Endothelial cell of umbilical vein (primary cell): ENCODE measurements at regions of chr11 and their contacts with region 1.

Region 1: DNA sequence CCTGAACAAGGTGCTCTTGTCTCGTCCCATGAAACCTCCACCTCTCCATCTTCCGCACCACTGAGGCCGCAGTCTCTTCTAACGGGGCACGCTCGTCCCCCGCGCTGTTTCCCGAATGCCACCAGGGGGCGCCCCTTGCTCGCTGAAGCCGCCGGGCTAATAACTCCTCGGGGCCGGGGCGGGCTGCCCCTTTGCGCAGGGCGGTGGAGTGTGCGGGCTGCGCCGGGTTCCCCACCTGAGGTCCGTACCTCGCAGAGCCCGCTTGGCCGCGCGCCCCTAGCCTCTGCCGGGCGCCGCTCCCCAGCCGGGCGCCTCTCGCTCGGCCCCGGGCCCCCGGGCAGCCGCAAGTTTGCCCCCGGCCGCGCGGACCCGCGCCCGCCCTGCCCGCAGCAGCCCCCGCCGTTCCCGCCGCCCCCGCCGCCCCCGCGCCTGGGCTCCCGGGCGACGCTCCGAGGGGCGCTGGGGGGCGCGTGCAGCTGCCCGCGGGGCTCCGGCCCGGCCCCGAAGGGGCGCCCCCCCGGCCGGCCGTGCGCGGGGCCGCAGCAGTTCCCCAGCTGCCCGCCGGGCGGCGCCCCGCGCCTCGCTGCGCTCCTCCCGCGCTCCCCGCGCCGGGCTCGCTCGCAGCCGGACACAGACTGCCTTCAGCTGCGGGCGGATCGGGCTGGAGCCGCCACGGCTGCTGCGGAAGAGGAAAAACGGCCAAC is at the start of gene GRIK4:
- DNase-seq: peak; percentile 64
- H3K4me3 ChIP-seq: peak within 1 kb of the TSS in 1 of 3 experiments; percentile 25
- H3K27ac ChIP-seq: no peak within 1 kb of the TSS
- H3K4me1 ChIP-seq: no peaks in the 10 kb centered on the region
- H3K27me3 ChIP-seq: peaks cover 7 to 12% of the 10 kb centered on the region in 2 experiments
- CTCF ChIP-seq: peak; percentile 89 to 94
- POLR2A ChIP-seq: no peak
- total RNA-seq, gene GRIK4: 0.74 and 1.6 TPM in 2 replicates

Region 2: GRCh38 chr11:120235024-120235861 is 276.0 kb before region 1 on chr11:
- CTCF ChIA-PET with region 1: no interaction called
- POLR2A ChIA-PET with region 1: no interaction called
- dilution Hi-C with region 1: no loop called
- intact Hi-C with region 1: loop called (anchors 1 kb)
- DNase-seq: peak; percentile 56
- H3K4me3 ChIP-seq: no peak overlapping the region
- H3K27ac ChIP-seq: no peak overlapping the region
- H3K4me1 ChIP-seq: no peaks in the 10 kb centered on the region
- H3K27me3 ChIP-seq: peaks cover 19% of the 10 kb centered on the region in 2 experiments
- CTCF ChIP-seq: peak; percentile 77 to 79
- POLR2A ChIP-seq: no peak

Region 3: DNA sequence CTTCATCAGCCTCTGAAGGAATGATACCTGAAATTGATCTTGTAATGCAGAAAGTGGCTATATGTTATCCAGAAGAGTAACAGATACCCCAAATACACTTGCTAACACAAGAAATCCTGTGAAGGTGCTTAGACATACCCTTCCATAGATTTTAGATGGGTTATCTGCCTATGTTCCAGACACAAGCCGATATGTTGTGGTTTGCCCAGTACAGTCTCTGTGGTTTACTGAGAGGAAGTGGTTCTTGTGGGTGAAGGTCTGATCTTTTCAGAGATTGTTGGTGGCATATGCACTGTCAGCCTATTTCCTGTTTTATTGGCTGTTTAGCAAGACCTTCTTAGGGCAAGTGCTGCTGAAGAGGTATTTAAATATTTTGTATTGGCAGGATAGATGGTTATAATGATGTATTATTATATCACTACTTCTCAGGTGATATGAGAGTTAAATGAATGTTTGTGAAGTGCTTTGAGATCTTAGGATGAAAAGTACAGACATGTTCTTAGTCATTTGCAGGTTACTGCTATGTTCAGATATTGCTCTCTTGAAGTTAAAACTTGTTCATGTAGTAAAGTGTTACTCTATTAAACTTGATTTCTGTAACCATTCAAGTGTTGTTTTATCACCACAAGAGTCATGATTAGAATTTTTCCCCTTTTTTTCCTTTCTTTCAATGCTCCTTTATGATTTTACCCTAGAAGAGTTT is 166.8 kb before region 1 on chr11:
- CTCF ChIA-PET with region 1: no interaction called
- POLR2A ChIA-PET with region 1: no interaction called
- dilution Hi-C with region 1: no loop called
- intact Hi-C with region 1: no loop called
- DNase-seq: no peak
- H3K4me3 ChIP-seq: no peak overlapping the region
- H3K27ac ChIP-seq: no peak overlapping the region
- H3K4me1 ChIP-seq: peaks cover 59% of the 10 kb centered on the region
- H3K27me3 ChIP-seq: no peaks in the 10 kb centered on the region
- CTCF ChIP-seq: no peak
- POLR2A ChIP-seq: no peak

Region 4: DNA sequence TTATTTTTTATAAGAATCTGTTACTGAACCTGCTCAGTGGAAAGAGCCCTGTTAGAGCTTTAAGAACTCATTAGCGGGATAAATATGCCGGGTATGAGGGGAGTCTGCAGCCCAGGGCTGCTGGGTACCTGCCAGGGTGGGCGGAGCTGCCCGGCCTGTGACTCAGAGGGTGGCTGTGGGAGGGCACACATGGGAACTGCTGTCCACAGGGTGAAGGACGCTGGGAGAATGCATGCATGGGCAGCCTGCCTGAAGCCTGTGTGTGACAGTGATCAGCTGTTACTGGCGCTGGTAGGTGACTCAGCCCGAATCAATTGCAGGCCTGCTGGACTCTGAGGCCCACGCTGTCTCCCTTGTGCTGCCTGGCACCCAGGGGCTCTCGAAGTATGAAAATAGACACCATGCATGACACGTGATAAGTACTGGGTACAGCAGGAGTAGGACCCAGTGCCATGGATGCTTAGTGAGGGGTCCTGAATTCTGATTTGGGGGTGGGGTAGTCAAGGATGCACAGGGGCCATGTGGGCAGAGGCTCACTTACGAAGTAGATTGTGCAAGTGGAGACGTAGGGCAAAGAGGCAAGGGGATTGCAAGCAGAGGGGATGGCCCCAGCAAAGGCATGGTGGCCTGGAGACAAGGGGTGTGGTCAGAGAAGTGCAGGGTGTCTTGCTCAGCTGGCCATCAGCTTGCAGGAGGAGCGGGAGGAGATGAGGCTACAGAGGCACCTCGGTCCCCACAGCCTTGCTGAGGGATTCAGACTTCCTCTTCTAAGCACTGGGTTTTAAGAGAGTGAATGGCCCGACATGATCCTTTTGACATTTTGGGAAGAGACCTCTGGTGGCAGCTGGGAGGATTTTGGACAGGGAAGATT is 36.8 kb after region 1 on chr11:
- CTCF ChIA-PET with region 1: interaction called, 18 read pairs
- POLR2A ChIA-PET with region 1: no interaction called
- dilution Hi-C with region 1: no loop called
- intact Hi-C with region 1: no loop called
- DNase-seq: peak; percentile 91
- H3K4me3 ChIP-seq: no peak overlapping the region
- H3K27ac ChIP-seq: no peak overlapping the region
- H3K4me1 ChIP-seq: peaks cover 13% of the 10 kb centered on the region
- H3K27me3 ChIP-seq: no peaks in the 10 kb centered on the region
- CTCF ChIP-seq: no peak
- POLR2A ChIP-seq: no peak

Region 5: GRCh38 chr11:120635136-120635810 is 124.0 kb after region 1 on chr11:
- CTCF ChIA-PET with region 1: interaction called, 6 read pairs
- POLR2A ChIA-PET with region 1: no interaction called
- dilution Hi-C with region 1: no loop called
- intact Hi-C with region 1: loop called (anchors 5 kb)
- DNase-seq: no peak
- H3K4me3 ChIP-seq: no peak overlapping the region
- H3K27ac ChIP-seq: no peak overlapping the region
- H3K4me1 ChIP-seq: no peaks in the 10 kb centered on the region
- H3K27me3 ChIP-seq: peaks cover 0 to 1% of the 10 kb centered on the region in 2 experiments
- CTCF ChIP-seq: no peak
- POLR2A ChIP-seq: no peak

Region 6: GRCh38 chr11:120784566-120785251 is 273.4 kb after region 1 on chr11:
- CTCF ChIA-PET with region 1: interaction called, 3 read pairs
- POLR2A ChIA-PET with region 1: no interaction called
- dilution Hi-C with region 1: no loop called
- intact Hi-C with region 1: loop called (anchors 1 kb)
- DNase-seq: no peak
- H3K4me3 ChIP-seq: no peak overlapping the region
- H3K27ac ChIP-seq: no peak overlapping the region
- H3K4me1 ChIP-seq: peaks cover 13% of the 10 kb centered on the region
- H3K27me3 ChIP-seq: peaks cover 2 to 5% of the 10 kb centered on the region in 2 experiments
- CTCF ChIP-seq: no peak
- POLR2A ChIP-seq: no peak

Region 7: GRCh38 chr11:120929664-120930154 is 418.4 kb after region 1 on chr11:
- CTCF ChIA-PET with region 1: interaction called, 43 read pairs
- POLR2A ChIA-PET with region 1: no interaction called
- dilution Hi-C with region 1: no loop called
- intact Hi-C with region 1: loop called (anchors 1 kb)
- DNase-seq: peak; percentile 40
- H3K4me3 ChIP-seq: no peak overlapping the region
- H3K27ac ChIP-seq: no peak overlapping the region
- H3K4me1 ChIP-seq: no peaks in the 10 kb centered on the region
- H3K27me3 ChIP-seq: no peaks in the 10 kb centered on the region
- CTCF ChIP-seq: peak; percentile 67 to 80
- POLR2A ChIP-seq: no peak

Region 8: DNA sequence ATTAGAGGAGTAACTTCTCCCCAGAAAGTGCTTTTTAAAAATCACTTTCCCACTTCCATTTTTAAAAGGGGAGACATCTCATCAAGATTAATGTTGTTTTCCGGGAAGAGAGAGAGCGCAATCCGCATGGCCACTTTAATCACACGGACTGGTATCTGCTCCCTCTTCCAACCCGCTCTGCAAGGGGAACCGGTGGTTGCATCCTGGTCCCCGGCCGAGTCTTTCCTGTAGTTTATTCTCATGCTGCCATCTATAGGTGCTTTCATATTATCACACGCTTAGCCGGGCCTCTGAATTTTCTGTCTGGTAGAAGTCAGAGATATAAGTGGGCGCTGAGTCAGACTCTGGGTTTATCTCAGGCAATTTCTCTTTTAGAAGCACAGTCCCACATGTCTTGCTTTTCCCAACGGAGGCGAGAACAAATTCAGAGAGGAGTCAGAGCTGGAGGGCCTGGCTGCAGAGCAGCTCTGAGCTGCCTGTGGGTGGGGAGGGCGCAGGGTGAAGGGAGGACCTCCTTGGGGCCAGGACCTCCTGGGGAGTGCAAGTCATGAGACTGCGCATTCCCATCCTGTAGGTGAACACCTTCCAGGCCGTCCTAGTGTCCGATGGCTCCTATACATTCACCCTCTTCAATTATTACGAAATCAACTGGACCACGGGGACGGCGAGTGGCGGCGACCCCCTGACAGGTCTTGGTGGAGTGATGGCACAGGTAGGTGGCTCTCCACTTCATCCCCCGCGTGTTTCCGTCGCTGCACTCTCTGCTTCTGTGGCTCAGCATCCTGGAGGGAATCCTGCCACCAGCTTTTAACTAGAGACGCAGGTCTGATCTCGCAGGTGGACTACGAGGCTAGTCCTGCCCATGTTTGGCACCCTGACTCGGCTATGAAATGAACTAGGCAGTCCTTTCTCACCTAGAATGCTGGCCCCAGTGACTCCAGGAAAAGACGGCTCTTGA is 601.5 kb after region 1 on chr11:
- CTCF ChIA-PET with region 1: interaction called, 3 read pairs
- POLR2A ChIA-PET with region 1: no interaction called
- dilution Hi-C with region 1: no loop called
- intact Hi-C with region 1: loop called (anchors 1 kb)
- DNase-seq: peak; percentile 54
- H3K4me3 ChIP-seq: no peak overlapping the region
- H3K27ac ChIP-seq: no peak overlapping the region
- H3K4me1 ChIP-seq: peaks cover 8% of the 10 kb centered on the region
- H3K27me3 ChIP-seq: peaks cover 0 to 7% of the 10 kb centered on the region in 2 experiments
- CTCF ChIP-seq: peak; percentile 39 to 45
- POLR2A ChIP-seq: no peak